A549 (cell line): ENCODE measurements at regions of chr17 and their contacts with region 1.

Region 1: GRCh38 chr17:7136266-7136877 is 21.8 kb upstream of the ASGR2 start:
- DNase-seq: peak; percentile 72 to 77
- ATAC-seq: peak; percentile 60 to 73; a peak in 3 of 6 replicates
- H3K4me3 ChIP-seq: peak overlapping the region; percentile 31
- H3K27ac ChIP-seq: peak overlapping the region; percentile 19 to 73
- H3K4me1 ChIP-seq: peaks cover 4% of the 10 kb centered on the region; the same call in 2 of the 3 replicates
- CTCF ChIP-seq: peak; percentile 99
- EP300 ChIP-seq: no peak
- POLR2A ChIP-seq: no peak
- RAD21 ChIP-seq: peak; percentile 99

Region 2: DNA sequence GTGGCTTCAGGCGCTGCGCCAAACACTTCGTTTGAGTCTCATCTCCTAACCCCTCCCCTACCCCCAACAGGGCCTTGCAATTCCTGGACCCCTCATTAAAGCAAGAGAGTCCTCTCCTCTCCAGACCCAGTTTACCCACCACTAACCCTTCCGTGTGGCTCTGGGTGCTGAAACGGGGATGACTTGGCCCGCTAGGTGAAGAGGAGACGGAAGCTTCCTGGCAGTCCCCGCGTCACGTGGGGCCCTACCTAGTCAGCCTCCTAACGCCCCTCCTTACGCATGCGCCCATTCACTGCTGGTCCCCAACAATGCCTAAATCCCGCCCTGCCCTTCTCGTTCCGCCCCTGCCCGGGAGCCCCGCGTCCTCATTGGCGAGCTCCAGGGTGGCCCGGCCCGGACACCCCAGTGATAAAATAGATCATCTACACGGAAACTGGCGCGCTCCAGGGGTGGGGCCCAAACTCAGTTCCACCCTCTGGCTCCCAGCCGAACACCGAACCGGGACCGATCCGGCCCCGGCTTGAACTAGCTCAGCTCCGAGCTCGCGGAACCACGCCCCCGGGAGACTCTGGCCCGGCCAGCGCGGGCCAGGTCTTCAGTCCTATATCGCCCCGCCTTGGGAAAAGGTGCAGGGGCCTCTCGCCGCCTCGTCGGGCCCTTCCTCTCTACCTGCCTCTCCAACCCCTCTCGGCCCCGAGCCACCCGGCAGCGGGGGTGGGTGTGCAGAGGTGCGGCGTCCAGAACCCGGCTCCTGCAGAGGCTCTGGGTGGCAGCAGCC is 100.6 kb before region 1 on chr17 and contains the start of gene SLC16A13:
- CTCF ChIA-PET with region 1: interaction called, 1,477 read pairs
- POLR2A ChIA-PET with region 1: interaction called, 5 read pairs
- DNase-seq: peak; percentile 99 to 100
- ATAC-seq: peak; percentile 93 to 97
- H3K4me3 ChIP-seq: peak within 1 kb of the TSS; percentile 85
- H3K27ac ChIP-seq: peak within 1 kb of the TSS; percentile 86 to 97
- H3K4me1 ChIP-seq: peaks cover 13% of the 10 kb centered on the region; the same call in 2 of the 3 replicates
- CTCF ChIP-seq: no peak
- EP300 ChIP-seq: no peak
- POLR2A ChIP-seq: peak; percentile 96
- RAD21 ChIP-seq: no peak
- polyA plus RNA-seq, gene SLC16A13: 6.2 and 8.0 TPM in 2 replicates

Region 3: GRCh38 chr17:7081341-7082062 is 54.9 kb before region 1 on chr17:
- CTCF ChIA-PET with region 1: interaction called, 17 read pairs
- POLR2A ChIA-PET with region 1: no interaction called
- DNase-seq: no peak
- ATAC-seq: no peak
- H3K4me3 ChIP-seq: no peak overlapping the region
- H3K27ac ChIP-seq: no peak overlapping the region
- H3K4me1 ChIP-seq: no peaks in the 10 kb centered on the region
- CTCF ChIP-seq: no peak
- EP300 ChIP-seq: no peak
- POLR2A ChIP-seq: no peak
- RAD21 ChIP-seq: no peak

Region 4: GRCh38 chr17:7109461-7110322 is 26.7 kb before region 1 on chr17:
- CTCF ChIA-PET with region 1: interaction called, 91 read pairs
- POLR2A ChIA-PET with region 1: no interaction called
- DNase-seq: no peak
- ATAC-seq: no peak
- H3K4me3 ChIP-seq: no peak overlapping the region
- H3K27ac ChIP-seq: no peak overlapping the region
- H3K4me1 ChIP-seq: peaks cover 4% of the 10 kb centered on the region; the same call in 2 of the 3 replicates
- CTCF ChIP-seq: no peak
- EP300 ChIP-seq: no peak
- POLR2A ChIP-seq: no peak
- RAD21 ChIP-seq: no peak

Region 5: DNA sequence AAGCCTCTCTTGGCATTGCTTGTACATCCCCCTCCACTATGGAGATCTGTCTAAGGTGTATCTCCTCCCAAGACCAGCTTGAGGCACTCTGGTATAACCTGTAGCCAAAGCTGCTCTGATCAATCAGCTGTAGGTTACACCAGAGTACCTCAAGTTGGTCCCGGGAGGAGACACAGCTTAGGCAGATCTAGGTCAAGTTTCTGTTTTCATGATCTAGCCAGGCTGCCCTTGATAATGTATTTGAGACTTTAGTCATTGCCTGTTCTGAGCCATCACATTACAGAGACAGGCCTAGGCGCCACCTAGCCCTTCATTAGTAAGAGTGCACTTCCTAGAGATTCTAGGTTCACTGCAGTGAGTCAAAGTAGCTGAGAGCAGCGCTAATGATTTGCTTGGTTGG is 11.4 kb after region 1 on chr17:
- CTCF ChIA-PET with region 1: interaction called, 27 read pairs
- POLR2A ChIA-PET with region 1: no interaction called
- DNase-seq: no peak
- ATAC-seq: peak; percentile 71 to 83
- H3K4me3 ChIP-seq: no peak overlapping the region
- H3K27ac ChIP-seq: no peak overlapping the region
- H3K4me1 ChIP-seq: no peaks in the 10 kb centered on the region
- CTCF ChIP-seq: no peak
- EP300 ChIP-seq: no peak
- POLR2A ChIP-seq: no peak
- RAD21 ChIP-seq: no peak

Region 6: DNA sequence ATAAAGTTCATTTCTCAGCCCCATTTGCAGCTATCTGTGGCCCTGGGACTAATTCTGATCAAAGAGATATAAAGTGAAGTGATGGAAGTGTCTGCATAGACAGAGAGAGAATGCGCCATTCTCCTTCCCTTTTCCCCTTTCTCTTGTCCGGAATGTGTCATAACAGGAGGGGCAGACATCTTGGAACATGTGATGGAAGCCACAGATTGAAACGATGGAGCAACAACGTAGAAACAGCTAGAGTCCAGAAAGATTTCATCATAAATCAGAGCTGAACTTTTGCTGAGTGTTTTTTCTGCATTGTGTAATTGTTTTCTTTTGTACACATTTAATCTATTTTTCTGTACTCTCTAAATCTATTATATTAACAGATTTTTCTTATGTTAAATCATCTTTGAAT is 31.5 kb after region 1 on chr17:
- CTCF ChIA-PET with region 1: interaction called, 12 read pairs
- POLR2A ChIA-PET with region 1: no interaction called
- DNase-seq: no peak
- ATAC-seq: no peak; a peak in 1 of 6 replicates
- H3K4me3 ChIP-seq: no peak overlapping the region
- H3K27ac ChIP-seq: no peak overlapping the region
- H3K4me1 ChIP-seq: peaks cover 2% of the 10 kb centered on the region; the same call in 1 of the 3 replicates
- CTCF ChIP-seq: no peak
- EP300 ChIP-seq: no peak
- POLR2A ChIP-seq: no peak
- RAD21 ChIP-seq: no peak

Region 7: GRCh38 chr17:7220582-7221277 is 84.4 kb after region 1 on chr17:
- CTCF ChIA-PET with region 1: no interaction called
- POLR2A ChIA-PET with region 1: no interaction called
- DNase-seq: peak; percentile 87 to 92
- ATAC-seq: peak; percentile 55 to 76
- H3K4me3 ChIP-seq: peak overlapping the region; percentile 74
- H3K27ac ChIP-seq: peak overlapping the region; percentile 88 to 98
- H3K4me1 ChIP-seq: peaks cover 44% of the 10 kb centered on the region
- CTCF ChIP-seq: peak; percentile 66
- EP300 ChIP-seq: no peak
- POLR2A ChIP-seq: peak; percentile 30
- RAD21 ChIP-seq: peak; percentile 60 to 69

Region 8: GRCh38 chr17:7380321-7380720 is 243.9 kb after region 1 on chr17:
- CTCF ChIA-PET with region 1: no interaction called
- POLR2A ChIA-PET with region 1: no interaction called
- DNase-seq: no peak
- ATAC-seq: no peak; a peak in 2 of 6 replicates
- H3K4me3 ChIP-seq: peak overlapping the region; percentile 46
- H3K27ac ChIP-seq: peak overlapping the region in 1 of 2 experiments; percentile 74; a peak in 4 of 6 replicates
- H3K4me1 ChIP-seq: no peaks in the 10 kb centered on the region
- CTCF ChIP-seq: no peak
- EP300 ChIP-seq: no peak
- POLR2A ChIP-seq: no peak
- RAD21 ChIP-seq: no peak